Activated CD4-positive, alpha-beta T cell treated with anti-CD3 and anti-CD28 coated beads for 36 hours (primary cell): ENCODE measurements at regions of chr20 and their contacts with region 1.

Region 1: GRCh38 chr20:38043512-38044300 is 10.2 kb downstream of the RPRD1B start:
- DNase-seq: peak; percentile 66
- ATAC-seq: peak; percentile 99
- H3K4me3 Mint-ChIP-seq: no peak overlapping the region
- H3K27ac Mint-ChIP-seq: peak overlapping the region; percentile 14
- H3K4me1 Mint-ChIP-seq: peaks cover 45% of the 10 kb centered on the region
- H3K27me3 Mint-ChIP-seq: no peaks in the 10 kb centered on the region

Region 2: GRCh38 chr20:38001173-38001872 is 42.4 kb before region 1 on chr20:
- CTCF ChIA-PET with region 1: no interaction called
- POLR2A ChIA-PET with region 1: interaction called, 4 read pairs
- intact Hi-C with region 1: loop called in 1 of 2 experiments (anchors 1 kb)
- DNase-seq: peak; percentile 46
- ATAC-seq: peak; percentile 87
- H3K4me3 Mint-ChIP-seq: no peak overlapping the region
- H3K27ac Mint-ChIP-seq: peak overlapping the region; percentile 41
- H3K4me1 Mint-ChIP-seq: peaks cover 43% of the 10 kb centered on the region
- H3K27me3 Mint-ChIP-seq: no peaks in the 10 kb centered on the region

Region 3: GRCh38 chr20:38779247-38780097 is 735.8 kb after region 1 on chr20:
- CTCF ChIA-PET with region 1: no interaction called
- POLR2A ChIA-PET with region 1: no interaction called
- intact Hi-C with region 1: no loop called
- DNase-seq: no peak
- ATAC-seq: peak; percentile 23
- H3K4me3 Mint-ChIP-seq: no peak overlapping the region
- H3K27ac Mint-ChIP-seq: no peak overlapping the region
- H3K4me1 Mint-ChIP-seq: peaks cover 9% of the 10 kb centered on the region
- H3K27me3 Mint-ChIP-seq: no peaks in the 10 kb centered on the region